Mammary epithelial cell (primary cell): ENCODE measurements at regions of chr9 and their contacts with region 1.

Region 1: GRCh38 chr9:17021379-17021970 is 113.4 kb upstream of the CNTLN start:
- DNase-seq: no peak
- H3K4me3 ChIP-seq: no peak overlapping the region
- H3K27ac ChIP-seq: no peak overlapping the region
- H3K4me1 ChIP-seq: no peaks in the 10 kb centered on the region
- H3K27me3 ChIP-seq: no peaks in the 10 kb centered on the region
- CTCF ChIP-seq: no peak

Region 2: DNA sequence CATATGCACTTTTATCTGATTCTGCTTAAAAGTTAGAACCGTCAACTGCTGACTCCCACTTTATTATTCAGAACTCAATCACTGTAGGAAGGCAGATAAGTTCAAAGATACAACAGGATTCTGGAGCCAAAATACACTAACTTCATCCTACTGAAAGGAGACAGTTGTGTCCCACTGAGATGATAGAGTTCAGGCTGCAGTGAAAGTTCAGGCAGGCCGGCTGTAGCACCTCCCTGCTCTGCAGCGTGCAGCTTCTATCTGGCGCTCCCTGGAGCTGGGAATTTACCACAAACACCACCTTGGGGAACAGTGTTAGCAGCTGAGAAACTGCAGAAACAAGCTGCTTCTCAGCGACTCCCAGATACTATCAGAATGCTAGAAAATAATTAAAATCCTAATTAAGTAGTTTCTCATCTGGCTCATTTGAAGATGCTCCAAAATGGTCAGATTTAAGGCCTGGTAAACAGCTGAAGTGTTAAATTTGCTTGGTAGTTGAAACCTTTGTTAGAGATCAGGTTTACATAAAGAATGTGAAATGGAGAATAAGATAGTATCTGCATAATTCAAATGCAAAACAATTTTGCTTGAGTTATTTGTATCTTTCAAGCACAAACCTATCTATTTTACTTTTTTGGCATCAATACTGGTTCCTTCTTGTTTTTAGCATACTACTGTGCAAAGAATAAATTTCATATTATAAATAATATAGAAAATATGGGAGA is 61.0 kb after region 1 on chr9:
- CTCF ChIA-PET with region 1: no interaction called
- dilution Hi-C with region 1: no loop called
- in situ Hi-C with region 1: no loop called
- intact Hi-C with region 1: loop called (anchors 10 kb)
- DNase-seq: peak; percentile 5
- H3K4me3 ChIP-seq: no peak overlapping the region
- H3K27ac ChIP-seq: no peak overlapping the region
- H3K4me1 ChIP-seq: no peaks in the 10 kb centered on the region
- H3K27me3 ChIP-seq: no peaks in the 10 kb centered on the region
- CTCF ChIP-seq: peak in 1 of 2 donors; percentile 5